Esophagus muscularis mucosa (tissue), 4 donors: ENCODE measurements at regions of chr11 and their contacts with region 1.

Region 1: DNA sequence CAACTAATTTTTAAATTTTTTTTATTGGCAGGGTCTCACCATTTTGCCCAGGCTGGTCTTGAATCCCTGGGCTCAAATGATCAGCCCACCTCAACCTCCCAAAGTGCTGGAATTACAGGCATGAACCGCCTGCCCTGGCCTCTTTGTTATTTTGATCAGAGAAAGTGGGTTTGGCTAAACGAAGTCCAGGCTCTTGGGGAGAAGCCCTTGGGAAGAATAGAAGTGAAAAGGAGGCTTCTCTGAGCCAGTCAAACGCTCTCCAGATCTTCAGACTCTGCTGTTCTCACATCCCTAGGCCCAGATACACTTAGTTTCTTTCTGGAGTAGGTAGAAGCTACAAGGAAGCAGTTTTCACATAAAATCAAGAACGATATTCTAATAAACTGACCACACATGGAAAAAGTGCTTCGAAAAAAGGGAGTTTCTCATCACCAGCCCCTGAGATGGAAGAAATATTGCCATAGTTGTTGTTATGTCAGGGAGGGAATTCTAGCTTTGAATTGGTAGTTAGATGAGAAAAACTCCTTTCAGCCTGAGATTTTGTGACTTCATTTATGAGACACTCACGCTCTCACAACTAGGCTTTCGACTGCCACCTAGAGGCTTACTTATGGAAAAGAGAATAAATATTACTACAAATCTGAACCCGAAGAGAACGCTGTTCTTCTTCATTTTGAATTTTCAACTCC is 41.7 kb upstream of the AQP11 start:
- DNase-seq: no peak
- H3K4me3 ChIP-seq: no peak overlapping the region
- H3K27ac ChIP-seq: no peak overlapping the region
- H3K4me1 ChIP-seq: peaks cover 0 to 8% (median 8%) of the 10 kb centered on the region in 4 donors
- H3K27me3 ChIP-seq: no peaks in the 10 kb centered on the region
- CTCF ChIP-seq: peak; percentile 54 to 68 (median 64)
- EP300 ChIP-seq: no peak
- POLR2A ChIP-seq: no peak

Region 2: GRCh38 chr11:77127232-77127911 is 420.6 kb before region 1 on chr11:
- intact Hi-C with region 1: loop called (anchors 5 kb)
- DNase-seq: no peak
- H3K4me3 ChIP-seq: peak overlapping the region; percentile 45 to 58 (median 52)
- H3K27ac ChIP-seq: no peak overlapping the region
- H3K4me1 ChIP-seq: peaks cover 14 to 38% (median 36%) of the 10 kb centered on the region in 4 donors
- H3K27me3 ChIP-seq: peaks cover 0 to 21% (median 0%) of the 10 kb centered on the region in 4 donors
- CTCF ChIP-seq: peak; percentile 92 to 95 (median 94)
- EP300 ChIP-seq: no peak
- POLR2A ChIP-seq: no peak